Cardiac septum (tissue), 1 donor: ENCODE measurements at regions of chr3 and their contacts with region 1.

Region 1: DNA sequence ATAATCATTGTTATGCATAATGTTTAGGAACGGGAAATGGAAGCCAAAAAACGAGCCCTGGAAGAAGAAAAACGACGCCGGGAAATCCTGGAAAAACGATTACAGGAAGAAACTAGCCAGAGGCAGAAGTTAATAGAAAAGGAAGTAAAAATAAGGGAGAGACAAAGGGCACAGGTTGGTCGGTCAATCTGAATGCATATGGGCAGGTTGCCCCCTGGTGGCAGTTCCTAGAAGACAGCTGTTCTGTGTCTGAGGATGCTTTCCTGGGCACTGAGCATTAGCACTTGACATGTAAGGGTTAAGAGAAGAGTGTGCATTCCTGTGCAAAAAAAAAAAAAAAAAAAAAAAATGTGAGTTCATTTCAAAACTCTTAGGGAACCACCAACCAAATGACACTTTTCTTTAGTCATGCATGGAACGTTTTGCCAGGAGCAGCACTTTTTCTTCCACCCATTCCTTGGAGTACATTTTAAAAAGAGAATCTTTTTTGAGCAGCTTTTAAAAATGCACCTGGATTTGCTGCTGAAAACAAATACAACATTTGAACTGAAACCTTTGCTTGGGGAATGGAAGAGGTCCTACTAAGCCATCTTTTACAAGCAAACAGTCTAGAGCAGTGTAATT is 11.1 kb upstream of the ABHD10 start:
- DNase-seq: peak; percentile 90

Region 2: GRCh38 chr3:111636366-111636885 is 331.3 kb before region 1 on chr3:
- intact Hi-C with region 1: no loop called
- DNase-seq: no peak

Region 3: DNA sequence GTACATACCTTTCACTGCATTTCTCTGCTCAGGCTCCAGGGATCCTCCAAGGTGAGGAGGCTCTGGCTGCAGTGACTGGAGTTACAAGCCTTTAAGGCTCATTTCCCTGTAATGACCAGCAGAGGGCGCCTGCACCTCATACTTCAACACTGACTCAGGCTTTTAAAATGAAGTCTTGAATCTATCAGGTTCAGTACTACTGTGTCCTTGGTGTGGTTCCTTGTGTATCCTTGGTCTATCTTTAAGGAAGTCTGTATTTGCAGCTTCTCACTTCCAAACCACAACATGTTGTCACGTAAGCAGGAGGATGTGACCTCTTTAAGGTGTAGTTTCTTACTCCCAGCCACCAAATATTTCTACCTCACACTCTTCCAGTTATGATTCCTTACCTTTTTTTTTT is 250.2 kb before region 1 on chr3:
- intact Hi-C with region 1: loop called (anchors 2 kb)
- DNase-seq: peak; percentile 84

Region 4: GRCh38 chr3:111924283-111924682 is 43.5 kb before region 1 on chr3:
- intact Hi-C with region 1: loop called (anchors 5 kb)
- DNase-seq: peak; percentile 81

Region 5: DNA sequence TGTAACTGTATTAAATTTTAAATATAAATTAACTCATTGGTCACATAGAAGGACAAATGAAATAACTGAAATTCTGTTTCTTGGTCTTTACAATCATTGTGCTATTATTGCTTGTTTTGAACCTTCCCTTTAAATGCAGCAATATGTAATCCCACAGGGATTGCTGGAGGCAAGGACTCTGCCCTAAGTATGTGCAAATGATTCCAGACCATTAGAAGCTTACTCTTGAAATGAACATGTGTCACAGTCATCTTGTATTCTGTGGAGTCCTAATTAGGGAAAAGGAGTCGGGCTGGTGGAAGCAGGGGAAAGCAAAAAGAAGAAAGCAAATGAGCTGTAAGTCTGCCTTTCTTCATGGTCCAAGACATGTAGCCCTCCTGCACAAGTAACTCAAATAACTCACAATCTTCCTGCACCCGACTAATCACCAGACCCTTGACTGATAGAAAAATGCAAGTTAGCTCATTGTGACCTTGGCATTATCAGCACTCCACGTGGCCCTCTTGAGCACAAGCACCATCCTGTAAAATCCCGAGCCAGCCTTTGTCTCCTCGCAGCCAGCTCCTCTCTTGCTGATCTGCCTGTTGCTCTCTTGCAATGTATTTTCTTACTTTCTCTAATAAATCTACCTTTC is 64.5 kb after region 1 on chr3:
- intact Hi-C with region 1: no loop called
- DNase-seq: no peak

Region 6: DNA sequence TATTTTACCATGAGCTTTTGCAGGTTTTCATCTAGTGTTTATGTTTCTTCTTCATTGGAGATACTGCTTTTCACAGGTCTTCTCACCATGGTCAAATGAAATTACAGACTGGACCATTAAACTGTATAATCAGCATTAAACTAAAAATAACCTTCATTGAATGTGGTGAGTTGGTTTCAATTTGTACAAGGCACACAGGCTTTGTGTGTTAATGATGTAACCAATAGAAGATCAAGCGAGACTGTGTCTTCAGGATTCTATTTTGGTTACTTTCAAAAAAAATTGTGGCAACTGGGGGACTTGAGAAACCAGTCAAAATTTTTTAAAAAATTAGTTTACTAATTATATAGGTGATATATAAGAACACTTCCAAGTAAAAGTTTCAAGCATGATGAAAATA is 219.5 kb after region 1 on chr3:
- intact Hi-C with region 1: no loop called
- DNase-seq: no peak